Breast epithelium (tissue), 4 donors: ENCODE measurements at regions of chr18 and their contacts with region 1.

Region 1: DNA sequence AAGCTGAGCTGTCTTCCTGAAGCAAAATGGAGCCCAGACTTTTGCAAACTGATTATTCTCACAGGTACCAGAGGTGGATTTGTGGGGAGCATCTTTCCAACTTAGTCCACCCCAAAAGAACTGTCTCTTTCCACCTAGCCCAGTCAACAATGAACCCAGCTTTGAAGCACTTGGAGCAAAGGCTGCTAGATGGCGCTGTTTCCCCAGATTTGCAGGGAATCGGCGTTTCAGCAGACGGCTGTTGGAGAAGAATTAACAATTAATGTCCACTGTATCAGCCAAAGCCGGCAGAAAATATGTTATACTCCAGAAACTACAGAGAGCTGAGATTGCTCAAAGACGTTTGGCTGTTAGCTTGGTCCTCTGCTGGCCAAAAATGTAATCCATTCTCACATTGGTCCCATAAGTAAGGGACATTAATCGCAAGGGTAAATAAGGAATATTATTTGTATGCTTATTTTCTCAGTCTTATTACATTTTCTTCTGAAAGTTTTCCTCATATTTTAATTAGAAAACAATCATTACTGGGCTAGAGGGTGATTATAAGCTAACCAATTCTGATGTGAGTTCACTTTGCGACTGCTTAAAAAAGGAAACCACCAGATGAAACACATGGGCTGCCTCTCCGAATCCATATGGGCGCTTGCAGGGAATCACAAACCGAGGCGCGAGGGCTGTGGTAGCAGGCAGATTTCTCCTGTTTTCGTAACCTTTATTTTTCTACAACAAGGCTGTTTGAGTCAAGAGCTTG is 423.8 kb upstream of the MEX3C start:
- DNase-seq: peak; percentile 42 to 61
- H3K4me3 ChIP-seq: no peak overlapping the region
- H3K27ac ChIP-seq: no peak overlapping the region
- H3K4me1 ChIP-seq: no peaks in the 10 kb centered on the region
- H3K27me3 ChIP-seq: no peaks in the 10 kb centered on the region
- CTCF ChIP-seq: peak; percentile 47 to 59 (median 58)
- POLR2A ChIP-seq: no peak

Region 2: GRCh38 chr18:51603551-51603950 is 17.7 kb before region 1 on chr18:
- intact Hi-C with region 1: no loop called
- DNase-seq: no peak
- H3K4me3 ChIP-seq: no peak overlapping the region
- H3K27ac ChIP-seq: no peak overlapping the region
- H3K4me1 ChIP-seq: no peaks in the 10 kb centered on the region
- H3K27me3 ChIP-seq: no peaks in the 10 kb centered on the region
- CTCF ChIP-seq: no peak
- POLR2A ChIP-seq: no peak

Region 3: GRCh38 chr18:51692612-51693011 is 71.3 kb after region 1 on chr18:
- intact Hi-C with region 1: no loop called
- DNase-seq: no peak
- H3K4me3 ChIP-seq: no peak overlapping the region
- H3K27ac ChIP-seq: no peak overlapping the region
- H3K4me1 ChIP-seq: no peaks in the 10 kb centered on the region
- H3K27me3 ChIP-seq: no peaks in the 10 kb centered on the region
- CTCF ChIP-seq: no peak
- POLR2A ChIP-seq: no peak

Region 4: GRCh38 chr18:51890762-51891161 is 269.5 kb after region 1 on chr18:
- intact Hi-C with region 1: loop called (anchors 5 kb)
- DNase-seq: peak; percentile 35 to 58
- H3K4me3 ChIP-seq: no peak overlapping the region
- H3K27ac ChIP-seq: peak overlapping the region in 1 of 2 donors; percentile 34
- H3K4me1 ChIP-seq: no peaks in the 10 kb centered on the region
- H3K27me3 ChIP-seq: no peaks in the 10 kb centered on the region
- CTCF ChIP-seq: no peak
- POLR2A ChIP-seq: no peak

Region 5: GRCh38 chr18:53219853-53220252 is 1598.6 kb after region 1 on chr18:
- intact Hi-C with region 1: loop called (anchors 5 kb)
- DNase-seq: no peak
- H3K4me3 ChIP-seq: no peak overlapping the region
- H3K27ac ChIP-seq: no peak overlapping the region
- H3K4me1 ChIP-seq: no peaks in the 10 kb centered on the region
- H3K27me3 ChIP-seq: no peaks in the 10 kb centered on the region
- CTCF ChIP-seq: no peak
- POLR2A ChIP-seq: no peak